IMR-90 (cell line): ENCODE measurements at regions of chr2 and their contacts with region 1.

Region 1: GRCh38 chr2:148644883-148645538 is 460 bp downstream of the EPC2 start:
- DNase-seq: peak; percentile 90
- ATAC-seq: peak; percentile 92
- H3K4me3 ChIP-seq: peak overlapping the region; percentile 86
- H3K27ac ChIP-seq: peak overlapping the region; percentile 98
- H3K4me1 ChIP-seq: no peaks in the 10 kb centered on the region
- H3K27me3 ChIP-seq: peaks cover 12% of the 10 kb centered on the region; the same call in 1 of the 2 replicates
- CTCF ChIP-seq: peak; percentile 37
- POLR2A ChIP-seq: peak; percentile 76
- RAD21 ChIP-seq: peak; percentile 24; the same call in 1 of the 2 replicates

Region 2: GRCh38 chr2:147989809-147990403 is 655.1 kb before region 1 on chr2:
- CTCF ChIA-PET with region 1: no interaction called
- POLR2A ChIA-PET with region 1: no interaction called
- dilution Hi-C with region 1: no loop called
- in situ Hi-C with region 1: no loop called
- intact Hi-C with region 1: loop called (anchors 5 kb)
- DNase-seq: peak; percentile 72
- ATAC-seq: peak; percentile 95
- H3K4me3 ChIP-seq: no peak overlapping the region
- H3K27ac ChIP-seq: no peak overlapping the region
- H3K4me1 ChIP-seq: no peaks in the 10 kb centered on the region; the same call in none of the 2 replicates
- H3K27me3 ChIP-seq: no peaks in the 10 kb centered on the region
- CTCF ChIP-seq: peak; percentile 99
- POLR2A ChIP-seq: no peak
- RAD21 ChIP-seq: peak; percentile 96

Region 3: DNA sequence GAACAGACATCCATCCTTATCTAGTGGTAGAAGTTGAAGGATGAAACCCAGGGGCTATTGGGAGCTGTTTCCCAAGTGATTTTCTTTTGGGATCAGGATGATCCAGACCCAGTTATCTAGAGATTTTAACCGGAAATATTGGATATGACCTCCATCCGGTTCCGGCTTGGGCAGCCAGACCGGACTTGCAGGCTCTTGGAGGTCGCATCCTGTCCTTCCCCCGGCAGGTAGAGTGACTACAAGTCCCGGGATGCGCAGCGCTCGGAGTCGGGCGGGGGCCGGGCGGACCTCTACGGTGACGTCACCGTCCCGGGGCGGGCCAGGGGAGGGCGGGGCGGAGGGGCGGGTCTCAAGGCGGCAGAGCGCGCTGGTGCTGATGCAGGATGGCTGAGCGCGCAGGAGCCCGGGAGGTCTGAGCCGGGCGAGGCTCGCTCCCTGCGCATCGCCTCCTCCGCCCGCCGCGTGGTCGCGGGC is 229.9 kb after region 1 on chr2 and contains the start of gene KIF5C:
- CTCF ChIA-PET with region 1: no interaction called
- POLR2A ChIA-PET with region 1: no interaction called
- dilution Hi-C with region 1: no loop called
- in situ Hi-C with region 1: no loop called
- intact Hi-C with region 1: loop called (anchors 5 kb)
- DNase-seq: peak; percentile 63
- ATAC-seq: peak; percentile 99
- H3K4me3 ChIP-seq: no peak within 1 kb of the TSS
- H3K27ac ChIP-seq: no peak within 1 kb of the TSS
- H3K4me1 ChIP-seq: no peaks in the 10 kb centered on the region
- H3K27me3 ChIP-seq: peaks cover 26% of the 10 kb centered on the region
- CTCF ChIP-seq: no peak
- POLR2A ChIP-seq: no peak
- RAD21 ChIP-seq: no peak
- total RNA-seq, gene KIF5C: 0.18 and 0.28 TPM in 2 replicates

Region 4: GRCh38 chr2:148971547-148971946 is 326.5 kb after region 1 on chr2:
- CTCF ChIA-PET with region 1: no interaction called
- POLR2A ChIA-PET with region 1: no interaction called
- dilution Hi-C with region 1: no loop called
- in situ Hi-C with region 1: loop called (anchors 25 kb)
- intact Hi-C with region 1: no loop called
- DNase-seq: no peak
- ATAC-seq: no peak
- H3K4me3 ChIP-seq: no peak overlapping the region
- H3K27ac ChIP-seq: no peak overlapping the region
- H3K4me1 ChIP-seq: no peaks in the 10 kb centered on the region
- H3K27me3 ChIP-seq: peaks cover 2% of the 10 kb centered on the region
- CTCF ChIP-seq: no peak
- POLR2A ChIP-seq: no peak
- RAD21 ChIP-seq: no peak

Region 5: GRCh38 chr2:149313512-149313972 is 668.5 kb after region 1 on chr2:
- CTCF ChIA-PET with region 1: no interaction called
- POLR2A ChIA-PET with region 1: no interaction called
- dilution Hi-C with region 1: no loop called
- in situ Hi-C with region 1: loop called (anchors 25 kb)
- intact Hi-C with region 1: no loop called
- DNase-seq: peak; percentile 24
- ATAC-seq: peak; percentile 79
- H3K4me3 ChIP-seq: no peak overlapping the region
- H3K27ac ChIP-seq: no peak overlapping the region
- H3K4me1 ChIP-seq: no peaks in the 10 kb centered on the region
- H3K27me3 ChIP-seq: no peaks in the 10 kb centered on the region
- CTCF ChIP-seq: peak; percentile 56
- POLR2A ChIP-seq: no peak
- RAD21 ChIP-seq: peak; percentile 61